ENCODE measurements at regions of chr9 and their contacts with region 1.

Region 1: DNA sequence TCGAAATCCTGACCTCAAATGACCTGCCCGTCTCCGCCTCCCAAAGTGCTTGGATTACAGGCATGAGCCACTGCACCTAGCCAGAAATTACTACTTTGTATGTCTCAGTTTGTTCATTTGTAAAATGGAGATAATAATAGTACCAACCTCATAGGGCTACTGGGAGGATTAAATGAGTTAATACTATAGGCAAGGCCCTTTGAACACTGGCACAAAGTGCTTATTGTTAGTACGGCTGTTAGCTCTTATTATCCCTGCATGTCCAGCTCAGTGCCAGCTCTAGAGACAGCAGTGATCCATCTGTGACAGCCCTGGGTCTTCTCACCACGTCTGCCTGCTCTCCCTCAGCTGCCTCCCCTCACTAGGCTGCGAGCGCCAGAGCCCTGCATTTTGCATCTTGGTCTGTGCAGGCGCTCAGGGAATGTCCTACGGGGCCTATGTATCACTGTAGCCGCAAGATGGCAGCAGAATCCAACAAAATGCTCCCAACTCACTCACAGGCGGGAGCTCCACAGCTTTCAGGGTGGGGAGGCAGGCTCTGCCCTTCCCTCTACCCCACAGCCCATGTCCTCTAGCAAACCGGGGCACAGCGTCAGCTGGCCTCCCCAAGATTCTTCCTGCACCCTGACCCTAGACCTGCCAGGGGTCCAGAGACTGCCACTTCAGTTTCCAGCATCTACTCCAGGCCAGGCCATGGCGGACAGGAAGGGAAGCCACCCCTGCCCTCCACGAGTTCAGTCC is 17.7 kb upstream of the AKNA start:
- DNase-seq: peak; percentile 21
- H3K4me3 ChIP-seq: no peak overlapping the region
- H3K27ac ChIP-seq: no peak overlapping the region
- H3K4me1 ChIP-seq: peaks cover 0 to 8% (median 0%) of the 10 kb centered on the region in 3 donors
- H3K27me3 ChIP-seq: no peaks in the 10 kb centered on the region
- CTCF ChIP-seq: peak; percentile 68 to 84 (median 78)
- POLR2A ChIP-seq: no peak

Region 2: GRCh38 chr9:114505187-114506081 is 100.0 kb after region 1 on chr9 and contains the start of gene WHRN:
- intact Hi-C with region 1: loop called (anchors 10 kb)
- DNase-seq: peak; percentile 55
- H3K4me3 ChIP-seq: peak within 1 kb of the TSS; percentile 62 to 86 (median 68)
- H3K27ac ChIP-seq: peak within 1 kb of the TSS; percentile 76 to 87 (median 84)
- H3K4me1 ChIP-seq: peaks cover 14 to 55% (median 15%) of the 10 kb centered on the region in 3 donors
- H3K27me3 ChIP-seq: peaks cover 0 to 54% (median 0%) of the 10 kb centered on the region in 4 donors
- CTCF ChIP-seq: no peak
- POLR2A ChIP-seq: peak in 2 of 4 donors; percentile 59 to 76
- total RNA-seq, gene WHRN: 2.9 to 6.1 (median 3.4) TPM

Region 3: GRCh38 chr9:114653556-114654159 is 248.2 kb after region 1 on chr9:
- intact Hi-C with region 1: loop called (anchors 5 kb)
- DNase-seq: no peak
- H3K4me3 ChIP-seq: no peak overlapping the region
- H3K27ac ChIP-seq: no peak overlapping the region
- H3K4me1 ChIP-seq: peaks cover 0 to 12% (median 0%) of the 10 kb centered on the region in 3 donors
- H3K27me3 ChIP-seq: no peaks in the 10 kb centered on the region
- CTCF ChIP-seq: peak; percentile 82 to 95 (median 90)
- POLR2A ChIP-seq: no peak

Region 4: DNA sequence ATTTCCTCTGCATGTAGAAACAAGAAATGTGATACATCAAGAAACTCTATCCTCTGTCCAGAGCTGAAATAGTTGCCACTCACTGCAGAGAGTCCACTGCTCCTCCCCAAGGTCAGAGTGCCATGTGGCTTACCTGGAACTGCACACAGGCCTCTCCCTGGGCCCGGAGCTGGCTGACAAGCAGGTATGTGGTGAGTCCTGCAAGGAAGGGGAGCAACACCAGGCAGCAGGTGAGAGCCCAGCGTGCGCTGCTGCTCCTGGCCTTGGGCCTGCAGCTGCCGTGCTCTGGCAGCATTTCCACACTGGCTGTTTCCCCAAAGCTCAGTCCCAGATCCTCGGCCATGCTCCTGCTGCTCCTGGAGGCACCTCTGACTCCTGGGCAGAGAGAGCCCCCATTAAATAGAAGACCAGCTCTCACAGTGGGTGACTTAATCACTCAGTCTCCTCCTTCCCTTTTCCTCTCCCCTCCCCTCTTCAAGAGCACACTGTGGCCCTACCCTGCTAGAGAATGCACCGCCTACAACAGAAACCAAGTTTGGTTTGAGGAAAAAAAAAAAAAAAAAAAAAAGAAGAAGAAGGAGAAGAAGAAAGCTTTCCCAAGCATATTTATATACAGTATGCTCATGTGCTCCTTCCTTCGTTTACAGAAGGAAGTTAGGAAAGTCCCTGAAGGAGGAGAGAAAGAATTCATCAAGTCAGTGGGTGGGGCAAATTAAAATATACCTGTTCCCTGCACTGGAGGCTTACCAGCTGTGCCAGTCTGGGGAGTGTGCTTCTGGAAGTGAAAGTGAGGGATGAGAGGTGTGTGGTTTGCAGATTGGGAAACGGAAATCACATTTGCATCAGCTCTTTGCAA is 400.4 kb after region 1 on chr9 and contains the start of gene TNFSF15:
- intact Hi-C with region 1: no loop called
- DNase-seq: no peak
- H3K4me3 ChIP-seq: peak within 1 kb of the TSS; percentile 5 to 52 (median 20)
- H3K27ac ChIP-seq: peak within 1 kb of the TSS; percentile 77 to 81 (median 79)
- H3K4me1 ChIP-seq: peaks cover 19 to 40% (median 27%) of the 10 kb centered on the region in 3 donors
- H3K27me3 ChIP-seq: no peaks in the 10 kb centered on the region
- CTCF ChIP-seq: no peak
- POLR2A ChIP-seq: no peak
- total RNA-seq, gene TNFSF15: 1.4 to 2.3 (median 1.5) TPM